ENCODE measurements at regions of chr14 and their contacts with region 1.

Region 1: GRCh38 chr14:71103662-71104484 is 196.6 kb downstream of the PCNX1 start:
- DNase-seq: peak; percentile 72
- H3K4me3 ChIP-seq: no peak overlapping the region
- H3K27ac ChIP-seq: peak overlapping the region; percentile 6
- H3K4me1 ChIP-seq: no peaks in the 10 kb centered on the region
- H3K27me3 ChIP-seq: no peaks in the 10 kb centered on the region
- CTCF ChIP-seq: peak; percentile 89

Region 2: DNA sequence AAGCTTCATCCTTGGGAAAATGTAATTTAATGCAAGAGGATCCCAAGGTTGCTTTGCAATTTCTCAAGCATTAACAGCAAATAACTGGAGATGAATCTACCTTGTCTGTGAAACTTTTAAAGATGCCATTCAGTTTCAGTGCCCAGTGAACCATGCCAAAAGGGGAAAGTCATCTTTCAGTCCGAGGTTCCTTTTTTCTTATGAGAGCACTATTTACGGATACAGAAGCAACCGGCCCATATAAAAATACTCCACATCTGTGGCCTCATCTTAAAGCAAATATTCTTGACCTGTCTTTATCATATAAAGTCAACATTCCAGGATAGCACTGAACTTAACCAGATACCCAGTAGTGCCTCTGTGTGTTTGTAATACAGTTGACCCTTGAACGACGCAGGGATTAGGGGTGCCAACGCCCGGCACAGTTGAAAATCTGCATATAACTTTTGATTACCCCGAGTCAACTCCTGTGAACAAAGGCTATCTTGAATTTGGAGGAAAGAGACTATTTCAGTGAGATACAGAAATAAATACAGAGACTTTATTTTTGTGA is 12.8 kb after region 1 on chr14:
- CTCF ChIA-PET with region 1: interaction called, 3 read pairs
- POLR2A ChIA-PET with region 1: interaction called, 12 read pairs
- intact Hi-C with region 1: no loop called
- DNase-seq: no peak
- H3K4me3 ChIP-seq: no peak overlapping the region
- H3K27ac ChIP-seq: no peak overlapping the region
- H3K4me1 ChIP-seq: peaks cover 9% of the 10 kb centered on the region
- H3K27me3 ChIP-seq: no peaks in the 10 kb centered on the region
- CTCF ChIP-seq: no peak

Region 3: GRCh38 chr14:71225113-71225512 is 121.2 kb after region 1 on chr14:
- CTCF ChIA-PET with region 1: no interaction called
- POLR2A ChIA-PET with region 1: no interaction called
- intact Hi-C with region 1: no loop called
- DNase-seq: no peak
- H3K4me3 ChIP-seq: no peak overlapping the region
- H3K27ac ChIP-seq: no peak overlapping the region
- H3K4me1 ChIP-seq: no peaks in the 10 kb centered on the region
- H3K27me3 ChIP-seq: no peaks in the 10 kb centered on the region
- CTCF ChIP-seq: no peak

Measured in A673 (cell line).